Naive thymus-derived CD4-positive, alpha-beta T cell (primary cell): ENCODE measurements at regions of chr12 and their contacts with region 1.

Region 1: DNA sequence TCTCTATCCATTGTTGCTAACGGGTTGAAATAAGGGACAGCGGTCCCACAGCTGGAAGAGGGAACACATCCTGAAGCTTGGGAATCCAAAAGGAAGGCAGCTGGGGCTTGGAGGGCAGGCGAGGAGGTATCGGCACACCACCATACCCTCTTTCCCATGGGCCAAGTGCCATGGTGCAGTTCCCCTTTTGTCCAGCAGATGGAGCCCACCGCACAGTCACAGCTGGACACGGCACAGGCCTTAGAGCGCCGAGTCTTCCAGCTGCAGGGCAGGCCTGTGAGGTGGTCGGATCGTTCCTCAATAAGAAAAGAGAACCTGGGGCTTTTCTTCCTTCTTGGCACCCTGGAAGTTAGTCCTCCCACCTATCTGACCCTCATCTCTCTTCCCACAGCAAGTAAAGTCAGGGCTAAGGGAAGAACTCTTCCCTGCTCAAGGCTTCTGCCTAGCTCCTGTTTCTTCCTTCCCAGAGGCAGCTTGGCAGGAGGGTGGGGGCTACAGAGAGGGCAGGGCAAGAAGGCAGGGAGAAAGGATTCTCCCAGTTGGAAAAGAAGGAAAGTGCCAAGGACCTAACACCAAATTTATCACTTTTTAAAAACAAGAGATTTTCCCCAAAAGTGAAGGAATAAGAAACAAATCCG is 8.6 kb downstream of the PPP1R1A start:
- DNase-seq: peak; percentile 39 to 83 (median 70)
- ATAC-seq: peak; percentile 94
- H3K4me3 ChIP-seq: no peak overlapping the region
- H3K4me3 Mint-ChIP-seq: no peak overlapping the region
- H3K27ac ChIP-seq: no peak overlapping the region
- H3K27ac Mint-ChIP-seq: no peak overlapping the region
- H3K4me1 ChIP-seq: peaks cover 0 to 7% of the 10 kb centered on the region in 2 donors
- H3K4me1 Mint-ChIP-seq: peaks cover 0 to 9% (median 7%) of the 10 kb centered on the region in 7 donors
- H3K27me3 ChIP-seq: no peaks in the 10 kb centered on the region
- H3K27me3 Mint-ChIP-seq: peaks cover 5 to 14% (median 12%) of the 10 kb centered on the region in 5 donors

Region 2: GRCh38 chr12:54596526-54596946 is 16.7 kb after region 1 on chr12:
- CTCF ChIA-PET with region 1: interaction called, 9 read pairs
- POLR2A ChIA-PET with region 1: no interaction called
- intact Hi-C with region 1: loop called in 1 of 2 experiments (anchors 1 kb)
- DNase-seq: peak in 8 of 9 donors; percentile 9 to 51 (median 26)
- ATAC-seq: peak; percentile 69
- H3K4me3 ChIP-seq: no peak overlapping the region
- H3K4me3 Mint-ChIP-seq: no peak overlapping the region
- H3K27ac ChIP-seq: no peak overlapping the region
- H3K27ac Mint-ChIP-seq: no peak overlapping the region
- H3K4me1 ChIP-seq: peaks cover 0 to 4% of the 10 kb centered on the region in 2 donors
- H3K4me1 Mint-ChIP-seq: peaks cover 0 to 8% (median 6%) of the 10 kb centered on the region in 7 donors
- H3K27me3 ChIP-seq: no peaks in the 10 kb centered on the region
- H3K27me3 Mint-ChIP-seq: peaks cover 0 to 35% (median 18%) of the 10 kb centered on the region in 5 donors